ENCODE measurements at regions of chr7 and their contacts with region 1.

Region 1: DNA sequence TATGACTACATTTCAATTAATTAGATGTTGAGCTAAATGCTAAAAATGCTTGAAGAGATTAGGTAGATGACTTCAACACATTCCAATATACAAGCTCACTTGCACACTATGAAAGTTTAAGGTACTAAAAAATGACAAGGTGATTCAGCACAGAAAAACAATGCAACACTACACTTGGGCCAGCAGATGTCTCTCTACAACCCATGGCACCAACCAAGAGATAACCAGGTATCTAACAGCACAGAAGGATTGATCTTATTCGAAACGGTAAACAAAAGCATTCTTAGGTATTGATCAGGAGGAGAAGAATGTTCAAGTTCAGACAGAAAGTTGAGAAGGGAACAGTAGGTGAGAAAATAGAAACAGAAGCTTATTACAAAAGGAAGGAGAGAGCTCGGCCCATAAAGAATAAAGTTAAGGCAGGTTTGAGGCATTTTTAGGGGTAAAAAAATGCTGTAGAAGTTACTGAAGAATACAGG is 248.2 kb upstream of the KLF14 start:
- DNase-seq: peak; percentile 12 to 74
- H3K4me3 ChIP-seq: no peak overlapping the region
- H3K27ac ChIP-seq: peak overlapping the region; percentile 17
- H3K4me1 ChIP-seq: 0 out of 2 replicates have a peak, but pooled peaks cover 7% of the 10 kb centered on the region
- H3K27me3 ChIP-seq: no peaks in the 10 kb centered on the region
- CTCF ChIP-seq: peak; percentile 86

Region 2: GRCh38 chr7:131007394-131008330 is 25.5 kb after region 1 on chr7:
- CTCF ChIA-PET with region 1: interaction called, 8 read pairs
- POLR2A ChIA-PET with region 1: no interaction called
- intact Hi-C with region 1: loop called (anchors 1 kb)
- DNase-seq: peak; percentile 70 to 97
- H3K4me3 ChIP-seq: no peak overlapping the region
- H3K27ac ChIP-seq: peak overlapping the region; percentile 64
- H3K4me1 ChIP-seq: peaks cover 67% of the 10 kb centered on the region
- H3K27me3 ChIP-seq: no peaks in the 10 kb centered on the region
- CTCF ChIP-seq: peak; percentile 71; the same call in 1 of the 2 replicates

Region 3: DNA sequence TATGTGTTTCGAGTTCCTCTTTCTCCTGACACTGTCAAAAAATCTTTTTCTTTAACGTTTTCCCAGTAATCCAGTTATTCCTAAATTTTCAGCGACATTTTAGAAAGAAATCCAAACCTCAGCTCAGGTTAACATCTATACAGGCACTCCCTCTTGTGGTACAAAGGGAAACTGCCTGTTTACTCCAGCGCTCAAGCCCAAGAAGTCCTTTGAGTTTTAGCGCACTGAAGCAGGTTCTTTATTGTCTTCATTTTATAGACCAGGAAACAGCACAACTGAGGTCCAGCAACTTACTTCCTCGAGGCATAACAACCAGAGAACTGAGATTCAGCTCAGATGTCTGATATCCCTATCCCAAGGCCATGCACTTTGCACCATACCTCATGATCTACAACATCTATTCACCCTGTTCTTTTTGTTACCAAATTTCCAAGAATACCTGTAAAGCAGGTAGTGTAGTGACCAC is 58.3 kb after region 1 on chr7:
- CTCF ChIA-PET with region 1: interaction called, 12 read pairs
- POLR2A ChIA-PET with region 1: no interaction called
- intact Hi-C with region 1: loop called (anchors 1 kb)
- DNase-seq: peak; percentile 51 to 77
- H3K4me3 ChIP-seq: no peak overlapping the region
- H3K27ac ChIP-seq: no peak overlapping the region; the same call in 1 of the 2 replicates
- H3K4me1 ChIP-seq: no peaks in the 10 kb centered on the region; the same call in none of the 2 replicates
- H3K27me3 ChIP-seq: no peaks in the 10 kb centered on the region
- CTCF ChIP-seq: peak; percentile 96

Region 4: GRCh38 chr7:131302876-131303707 is 320.9 kb after region 1 on chr7:
- CTCF ChIA-PET with region 1: interaction called, 4 read pairs
- POLR2A ChIA-PET with region 1: no interaction called
- intact Hi-C with region 1: loop called (anchors 5 kb)
- DNase-seq: peak in 1 of 2 experiments; percentile 38
- H3K4me3 ChIP-seq: no peak overlapping the region
- H3K27ac ChIP-seq: no peak overlapping the region
- H3K4me1 ChIP-seq: peaks cover 11% of the 10 kb centered on the region
- H3K27me3 ChIP-seq: no peaks in the 10 kb centered on the region
- CTCF ChIP-seq: peak; percentile 70

Region 5: DNA sequence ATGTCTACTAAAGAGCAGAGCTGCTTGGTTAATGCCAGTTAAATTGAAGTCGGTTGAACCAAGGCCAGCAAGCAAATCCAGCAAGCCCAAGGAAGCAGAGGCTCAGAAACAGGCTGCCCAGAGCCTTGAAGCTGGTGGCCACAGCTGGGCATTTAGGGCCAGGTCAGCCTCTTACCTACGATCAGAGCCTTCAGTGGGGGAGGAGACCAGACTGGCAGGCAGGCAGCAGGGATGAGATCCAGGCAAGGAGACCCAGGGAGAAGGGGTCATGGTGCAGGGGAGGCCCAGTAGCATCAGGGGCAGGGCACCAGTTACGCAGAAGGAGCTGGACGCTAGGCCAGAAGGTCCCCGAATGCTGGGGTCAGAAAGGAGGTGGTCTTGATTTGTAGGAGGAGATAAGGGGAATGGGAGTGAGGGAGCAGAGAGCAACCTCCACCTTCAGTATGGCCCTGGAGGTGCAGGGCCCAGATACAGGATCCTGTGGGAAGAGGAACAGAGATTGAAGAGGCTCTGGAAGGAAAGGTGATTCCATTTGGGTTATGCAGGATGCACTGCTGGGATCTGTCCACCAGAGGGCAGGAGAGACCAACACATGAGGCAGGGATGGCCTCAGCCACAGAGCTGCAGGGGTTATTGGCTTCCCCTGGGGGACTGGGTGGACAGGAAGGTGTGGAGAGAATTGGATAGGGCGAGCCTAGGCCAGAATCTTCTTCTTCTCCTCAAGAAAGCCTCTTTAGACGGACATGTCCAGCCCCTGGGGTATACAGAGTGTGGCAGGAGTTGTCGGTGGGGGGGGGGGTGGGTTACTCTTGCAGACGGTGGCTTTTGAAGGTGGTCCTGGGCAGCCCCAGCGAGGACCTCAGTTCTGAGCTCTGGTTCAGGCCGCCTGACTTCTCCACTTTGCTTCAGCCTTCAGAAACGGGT is 706.8 kb after region 1 on chr7:
- CTCF ChIA-PET with region 1: no interaction called
- POLR2A ChIA-PET with region 1: no interaction called
- intact Hi-C with region 1: no loop called
- DNase-seq: peak; percentile 43 to 70
- H3K4me3 ChIP-seq: no peak overlapping the region
- H3K27ac ChIP-seq: no peak overlapping the region
- H3K4me1 ChIP-seq: no peaks in the 10 kb centered on the region
- H3K27me3 ChIP-seq: peaks cover 95% of the 10 kb centered on the region
- CTCF ChIP-seq: peak; percentile 98